ENCODE measurements at regions of chr19 and their contacts with region 1.

Region 1: GRCh38 chr19:2648528-2648937 is 54.0 kb downstream of the GNG7 start:
- DNase-seq: peak; percentile 82
- H3K4me3 ChIP-seq: no peak overlapping the region
- H3K27ac ChIP-seq: no peak overlapping the region
- H3K4me1 ChIP-seq: no peaks in the 10 kb centered on the region
- H3K27me3 ChIP-seq: no peaks in the 10 kb centered on the region
- CTCF ChIP-seq: peak; percentile 87

Region 2: DNA sequence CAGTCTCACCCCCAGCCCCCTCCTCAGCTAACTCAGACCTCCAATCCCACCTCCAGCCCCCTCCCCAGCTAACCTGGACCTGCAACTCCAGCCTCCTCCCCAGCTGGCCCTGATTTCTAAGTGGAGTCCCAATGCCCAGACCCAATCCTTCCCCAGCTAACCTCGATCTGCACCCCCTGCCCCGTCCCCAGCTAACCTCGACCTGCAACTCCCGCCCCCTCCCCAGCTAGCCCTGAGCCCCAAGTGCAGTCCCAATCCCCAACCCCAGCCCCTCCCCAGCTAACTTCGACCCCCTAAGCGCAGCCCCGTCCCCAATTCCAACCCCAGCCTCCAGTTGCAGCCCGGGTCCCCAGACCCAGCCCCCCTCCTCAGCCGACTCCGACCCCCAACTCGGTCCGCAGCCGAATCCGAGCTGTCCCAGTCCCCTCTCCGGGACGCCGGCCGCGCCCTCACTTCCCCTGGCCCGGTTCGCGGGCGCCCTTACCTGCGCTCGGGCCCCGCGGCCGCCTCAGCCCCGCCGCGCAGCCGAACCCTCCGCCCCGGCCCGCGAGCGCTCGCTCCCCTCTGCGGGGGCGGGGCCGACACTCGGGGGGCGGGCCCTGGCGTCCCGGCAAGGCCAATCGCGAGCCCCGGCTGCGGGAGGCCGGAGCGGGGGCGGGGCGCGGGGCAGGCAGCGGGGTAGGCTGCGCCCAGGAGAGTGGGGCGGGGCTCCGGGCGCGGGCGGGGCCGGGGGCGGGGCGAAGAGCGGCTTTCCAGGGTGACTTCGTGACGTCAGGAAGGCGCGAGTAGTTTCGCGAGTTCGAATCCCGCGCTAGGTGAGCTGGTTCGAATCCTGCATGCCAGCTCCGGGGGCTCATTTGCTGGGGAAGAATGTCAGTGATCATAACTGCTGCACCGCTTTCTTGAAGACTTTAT is 53.9 kb after region 1 on chr19 and contains the start of gene GNG7:
- intact Hi-C with region 1: no loop called
- DNase-seq: peak; percentile 95
- H3K4me3 ChIP-seq: peak within 1 kb of the TSS; percentile 35
- H3K27ac ChIP-seq: no peak within 1 kb of the TSS
- H3K4me1 ChIP-seq: no peaks in the 10 kb centered on the region
- H3K27me3 ChIP-seq: no peaks in the 10 kb centered on the region
- CTCF ChIP-seq: no peak
- total RNA-seq, gene GNG7: 1.5 to 3.2 TPM

Region 3: DNA sequence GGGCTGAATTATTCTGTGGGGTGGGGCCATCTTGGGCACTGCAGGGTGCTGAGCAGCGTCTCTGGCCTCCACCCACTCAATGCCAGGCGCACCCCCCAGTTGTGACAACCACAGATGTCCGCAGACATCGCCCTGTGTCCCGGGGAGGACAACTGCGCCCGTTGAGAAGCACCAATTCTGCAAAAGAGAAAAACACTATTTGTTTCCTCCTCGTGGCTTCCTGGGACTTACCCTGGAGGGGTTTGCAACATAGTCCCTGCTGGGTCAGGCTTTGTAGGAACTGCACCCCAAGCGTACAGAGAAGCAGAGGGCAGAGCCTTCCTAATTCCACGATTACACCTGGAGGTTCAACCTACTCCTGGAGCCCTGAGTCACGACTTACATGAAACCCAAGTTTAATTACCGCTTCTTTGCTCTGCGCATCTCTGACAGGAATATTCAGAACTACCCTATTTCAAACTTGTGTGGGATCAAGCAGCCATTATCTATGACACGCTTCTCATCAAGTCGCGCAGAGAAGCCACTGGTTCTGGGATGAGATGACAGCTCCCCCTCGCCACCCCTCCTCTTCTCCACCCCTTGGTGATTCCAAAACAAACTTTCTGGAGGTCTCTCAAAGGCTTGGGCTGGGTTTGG is 102.4 kb after region 1 on chr19:
- intact Hi-C with region 1: loop called (anchors 2 kb)
- DNase-seq: no peak
- H3K4me3 ChIP-seq: no peak overlapping the region
- H3K27ac ChIP-seq: no peak overlapping the region
- H3K4me1 ChIP-seq: no peaks in the 10 kb centered on the region
- H3K27me3 ChIP-seq: no peaks in the 10 kb centered on the region
- CTCF ChIP-seq: no peak

Region 4: DNA sequence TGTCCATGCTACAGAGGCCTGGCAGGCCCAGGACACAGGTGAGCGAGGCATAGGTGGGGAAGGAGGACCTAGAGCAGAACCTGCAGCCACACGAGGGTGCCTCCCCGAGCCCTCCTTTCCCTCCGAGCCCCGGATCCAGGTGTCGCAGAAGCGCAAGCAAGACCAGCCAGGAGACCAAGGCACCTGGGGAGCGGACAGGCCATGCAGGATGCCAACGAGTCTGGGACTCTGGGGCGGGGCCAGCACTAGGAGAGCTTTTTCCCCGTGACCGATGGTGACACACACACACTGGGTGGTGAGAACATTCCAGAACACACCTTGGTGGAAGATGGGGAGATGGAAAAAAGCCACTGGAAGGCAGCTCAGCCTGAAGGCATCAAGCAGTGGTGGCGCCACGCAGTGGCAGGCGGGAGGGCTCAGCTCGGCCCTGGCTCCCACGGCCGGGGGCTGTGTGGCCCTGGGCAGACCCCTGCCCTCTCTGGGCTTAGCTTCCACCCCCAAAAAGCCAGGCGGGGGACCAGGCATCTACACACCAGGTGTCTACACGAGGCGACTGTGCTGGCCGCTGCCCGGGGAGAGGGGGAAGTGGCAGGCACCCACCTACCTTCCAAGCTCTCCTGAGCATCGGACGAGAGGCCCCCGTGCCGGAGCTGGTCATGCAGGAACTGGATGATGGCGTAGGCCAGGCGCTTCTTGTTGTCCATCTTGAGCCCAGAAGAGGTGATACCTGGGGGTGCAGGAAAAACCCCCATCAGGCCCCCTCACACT is 120.0 kb after region 1 on chr19:
- intact Hi-C with region 1: no loop called
- DNase-seq: no peak
- H3K4me3 ChIP-seq: no peak overlapping the region
- H3K27ac ChIP-seq: no peak overlapping the region
- H3K4me1 ChIP-seq: no peaks in the 10 kb centered on the region
- H3K27me3 ChIP-seq: no peaks in the 10 kb centered on the region
- CTCF ChIP-seq: no peak

Region 5: DNA sequence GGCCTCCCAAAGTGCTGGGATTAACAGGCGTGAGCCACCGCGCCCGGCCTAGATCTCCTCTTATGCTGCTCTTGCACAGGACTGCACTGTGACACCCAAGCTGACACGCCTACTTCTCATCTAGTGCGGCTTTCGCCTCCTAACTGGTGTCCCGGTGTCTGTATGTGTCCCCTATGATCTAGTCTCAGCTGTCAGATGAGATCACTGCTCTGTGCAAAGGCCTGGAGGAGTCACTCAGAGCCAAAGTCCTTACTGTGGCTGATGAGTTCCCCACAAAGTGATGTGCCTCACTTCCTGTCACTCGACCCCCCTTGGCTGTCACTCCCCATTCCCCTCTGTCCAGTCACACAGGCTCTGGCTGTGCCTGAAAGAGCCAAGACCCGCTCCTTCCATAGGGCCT is 221.1 kb after region 1 on chr19:
- intact Hi-C with region 1: loop called (anchors 5 kb)
- DNase-seq: no peak
- H3K4me3 ChIP-seq: no peak overlapping the region
- H3K27ac ChIP-seq: no peak overlapping the region
- H3K4me1 ChIP-seq: no peaks in the 10 kb centered on the region
- H3K27me3 ChIP-seq: no peaks in the 10 kb centered on the region
- CTCF ChIP-seq: no peak

Measured in colonic mucosa (tissue), 4 donors.